CD4-positive, alpha-beta memory T cell (primary cell): ENCODE measurements at regions of chr2 and their contacts with region 1.

Region 1: GRCh38 chr2:131492418-131493198 is 411 bp upstream of the MZT2A start:
- DNase-seq: peak; percentile 93 to 98 (median 95)
- H3K4me3 ChIP-seq: peak overlapping the region; percentile 90 to 93
- H3K4me3 Mint-ChIP-seq: peak overlapping the region; percentile 93 to 99 (median 96)
- H3K27ac ChIP-seq: peak overlapping the region; percentile 94
- H3K27ac Mint-ChIP-seq: peak overlapping the region; percentile 97 to 100 (median 99)
- H3K4me1 ChIP-seq: peaks cover 38% of the 10 kb centered on the region
- H3K4me1 Mint-ChIP-seq: peaks cover 15 to 56% (median 37%) of the 10 kb centered on the region in 4 donors
- H3K27me3 ChIP-seq: no peaks in the 10 kb centered on the region
- H3K27me3 Mint-ChIP-seq: no peaks in the 10 kb centered on the region

Region 2: DNA sequence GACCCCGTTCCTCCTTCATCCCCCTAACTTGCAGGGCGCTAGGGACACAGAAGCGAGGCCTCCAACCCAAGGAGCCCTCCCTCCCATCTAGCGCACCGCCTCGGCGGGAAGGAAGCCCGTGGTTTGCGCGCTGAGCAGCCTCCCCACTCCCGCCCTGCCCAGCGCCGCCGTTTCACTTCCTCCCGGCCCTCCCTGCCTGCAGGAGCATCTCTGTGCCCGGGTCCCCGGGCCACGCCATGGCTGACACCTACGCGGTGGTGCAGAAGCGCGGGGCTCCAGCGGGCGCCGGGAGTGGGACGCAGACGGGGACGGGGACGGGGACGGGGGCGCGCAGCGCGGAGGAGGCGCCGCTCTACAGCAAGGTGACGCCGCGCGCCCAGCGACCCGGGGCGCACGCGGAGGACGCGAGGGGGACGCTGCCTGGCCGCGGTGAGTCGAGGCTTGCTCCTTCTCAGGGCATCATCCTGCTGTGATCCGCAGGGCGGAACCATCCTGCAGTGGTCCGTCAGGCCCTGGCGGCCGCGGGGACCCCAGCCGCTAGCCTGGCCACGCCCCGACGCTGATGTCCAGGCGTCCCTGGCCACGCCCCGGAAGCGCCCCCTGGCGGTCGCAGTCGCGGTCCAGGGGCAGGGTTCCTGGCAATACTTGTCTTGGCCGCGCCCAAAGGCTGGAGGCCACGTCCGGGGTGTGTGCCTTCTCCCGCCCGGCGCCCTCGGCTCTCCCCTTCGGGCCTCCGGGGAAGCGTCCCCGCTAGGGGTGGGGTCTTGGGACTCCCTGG is 1120.4 kb before region 1 on chr2:
- CTCF ChIA-PET with region 1: no interaction called
- POLR2A ChIA-PET with region 1: no interaction called
- intact Hi-C with region 1: loop called (anchors 5 kb)
- DNase-seq: peak; percentile 65 to 76 (median 74)
- H3K4me3 ChIP-seq: peak overlapping the region; percentile 77 to 88
- H3K4me3 Mint-ChIP-seq: peak overlapping the region; percentile 92 to 98 (median 95)
- H3K27ac ChIP-seq: peak overlapping the region; percentile 57
- H3K27ac Mint-ChIP-seq: peak overlapping the region; percentile 90 to 98 (median 97)
- H3K4me1 ChIP-seq: peaks cover 64% of the 10 kb centered on the region
- H3K4me1 Mint-ChIP-seq: peaks cover 51 to 73% (median 64%) of the 10 kb centered on the region in 4 donors
- H3K27me3 ChIP-seq: no peaks in the 10 kb centered on the region
- H3K27me3 Mint-ChIP-seq: no peaks in the 10 kb centered on the region

Region 3: DNA sequence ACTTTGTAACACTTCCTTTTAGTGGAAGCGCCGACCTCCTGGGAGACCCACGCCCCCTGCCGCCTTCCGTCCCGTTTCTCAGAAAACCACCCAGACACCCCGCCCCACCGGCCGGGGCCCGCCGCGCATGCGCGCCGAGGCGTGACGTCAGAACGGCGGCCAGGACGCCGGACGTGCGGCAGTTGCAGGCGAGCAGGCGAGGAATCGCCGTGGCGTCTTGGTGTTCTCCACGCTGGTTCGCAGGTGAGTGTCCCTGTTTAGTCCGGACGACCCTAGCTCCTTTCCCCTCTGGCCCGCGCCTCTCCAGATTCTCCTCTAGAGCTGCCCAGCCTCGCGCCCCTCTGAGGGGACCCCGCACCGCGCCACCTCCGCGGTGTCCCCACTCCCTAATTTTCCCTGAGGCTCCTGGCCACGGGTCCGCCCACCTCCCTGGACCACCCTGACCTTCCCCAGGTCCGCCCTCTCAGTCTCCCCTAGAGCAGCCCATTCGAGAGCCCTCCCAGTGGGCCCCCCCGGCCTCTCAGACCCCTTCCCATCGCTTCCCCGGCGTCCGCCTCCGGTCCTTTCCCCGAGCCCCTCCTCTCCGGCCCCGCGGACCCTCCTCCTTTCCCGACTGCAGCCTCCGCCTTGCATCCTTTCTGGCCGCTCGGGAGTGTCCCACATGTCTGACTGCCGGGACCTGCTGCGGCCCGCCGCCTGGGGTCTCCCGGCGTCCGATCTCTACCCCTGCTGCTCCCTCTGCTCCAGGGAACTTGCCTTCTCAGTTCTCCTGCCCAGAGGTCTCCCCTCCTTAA is 387.3 kb before region 1 on chr2 and contains the start of gene PLEKHB2:
- CTCF ChIA-PET with region 1: no interaction called
- POLR2A ChIA-PET with region 1: interaction called, 3 read pairs
- intact Hi-C with region 1: loop called (anchors 5 kb)
- DNase-seq: peak; percentile 89 to 97 (median 92)
- H3K4me3 ChIP-seq: peak within 1 kb of the TSS; percentile 90 to 91
- H3K4me3 Mint-ChIP-seq: peak within 1 kb of the TSS; percentile 94 to 99 (median 98)
- H3K27ac ChIP-seq: peak within 1 kb of the TSS; percentile 95
- H3K27ac Mint-ChIP-seq: peak within 1 kb of the TSS; percentile 92 to 99 (median 97)
- H3K4me1 ChIP-seq: peaks cover 45% of the 10 kb centered on the region
- H3K4me1 Mint-ChIP-seq: peaks cover 34 to 59% (median 45%) of the 10 kb centered on the region in 4 donors
- H3K27me3 ChIP-seq: no peaks in the 10 kb centered on the region
- H3K27me3 Mint-ChIP-seq: no peaks in the 10 kb centered on the region
- total RNA-seq, gene PLEKHB2: 45.5 to 48.3 TPM

Region 4: DNA sequence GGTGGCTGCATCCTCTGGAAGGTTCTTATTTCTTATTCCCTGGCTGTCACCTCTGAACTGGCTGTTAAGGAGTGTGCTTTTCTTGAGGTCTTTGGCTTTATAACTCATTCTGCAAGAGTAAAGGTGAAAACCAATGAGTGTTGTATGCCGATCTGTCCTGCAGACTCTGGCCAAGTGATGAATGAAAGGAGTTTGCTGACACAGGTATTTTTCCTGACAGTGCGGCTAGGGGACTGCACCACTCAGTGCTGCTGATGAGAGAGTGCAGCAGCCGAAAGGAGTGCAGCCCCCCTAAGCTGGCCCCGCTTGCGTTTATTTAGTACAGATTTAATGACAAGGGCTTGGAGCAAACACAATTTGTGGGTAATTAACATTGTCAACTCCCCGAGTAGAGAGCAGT is 170.4 kb before region 1 on chr2:
- CTCF ChIA-PET with region 1: no interaction called
- POLR2A ChIA-PET with region 1: no interaction called
- intact Hi-C with region 1: no loop called
- DNase-seq: no peak
- H3K4me3 ChIP-seq: no peak overlapping the region
- H3K4me3 Mint-ChIP-seq: no peak overlapping the region
- H3K27ac ChIP-seq: no peak overlapping the region
- H3K27ac Mint-ChIP-seq: no peak overlapping the region
- H3K4me1 ChIP-seq: no peaks in the 10 kb centered on the region
- H3K4me1 Mint-ChIP-seq: no peaks in the 10 kb centered on the region
- H3K27me3 ChIP-seq: no peaks in the 10 kb centered on the region
- H3K27me3 Mint-ChIP-seq: peaks cover 6 to 12% of the 10 kb centered on the region in 2 donors

Region 5: GRCh38 chr2:131521961-131522794 is 29.6 kb after region 1 on chr2:
- CTCF ChIA-PET with region 1: interaction called, 8 read pairs
- POLR2A ChIA-PET with region 1: interaction called, 11 read pairs
- intact Hi-C with region 1: loop called (anchors 1 kb)
- DNase-seq: no peak
- H3K4me3 ChIP-seq: no peak overlapping the region
- H3K4me3 Mint-ChIP-seq: no peak overlapping the region
- H3K27ac ChIP-seq: no peak overlapping the region
- H3K27ac Mint-ChIP-seq: no peak overlapping the region
- H3K4me1 ChIP-seq: peaks cover 1% of the 10 kb centered on the region
- H3K4me1 Mint-ChIP-seq: peaks cover 0 to 2% (median 0%) of the 10 kb centered on the region in 4 donors
- H3K27me3 ChIP-seq: no peaks in the 10 kb centered on the region
- H3K27me3 Mint-ChIP-seq: no peaks in the 10 kb centered on the region

Region 6: DNA sequence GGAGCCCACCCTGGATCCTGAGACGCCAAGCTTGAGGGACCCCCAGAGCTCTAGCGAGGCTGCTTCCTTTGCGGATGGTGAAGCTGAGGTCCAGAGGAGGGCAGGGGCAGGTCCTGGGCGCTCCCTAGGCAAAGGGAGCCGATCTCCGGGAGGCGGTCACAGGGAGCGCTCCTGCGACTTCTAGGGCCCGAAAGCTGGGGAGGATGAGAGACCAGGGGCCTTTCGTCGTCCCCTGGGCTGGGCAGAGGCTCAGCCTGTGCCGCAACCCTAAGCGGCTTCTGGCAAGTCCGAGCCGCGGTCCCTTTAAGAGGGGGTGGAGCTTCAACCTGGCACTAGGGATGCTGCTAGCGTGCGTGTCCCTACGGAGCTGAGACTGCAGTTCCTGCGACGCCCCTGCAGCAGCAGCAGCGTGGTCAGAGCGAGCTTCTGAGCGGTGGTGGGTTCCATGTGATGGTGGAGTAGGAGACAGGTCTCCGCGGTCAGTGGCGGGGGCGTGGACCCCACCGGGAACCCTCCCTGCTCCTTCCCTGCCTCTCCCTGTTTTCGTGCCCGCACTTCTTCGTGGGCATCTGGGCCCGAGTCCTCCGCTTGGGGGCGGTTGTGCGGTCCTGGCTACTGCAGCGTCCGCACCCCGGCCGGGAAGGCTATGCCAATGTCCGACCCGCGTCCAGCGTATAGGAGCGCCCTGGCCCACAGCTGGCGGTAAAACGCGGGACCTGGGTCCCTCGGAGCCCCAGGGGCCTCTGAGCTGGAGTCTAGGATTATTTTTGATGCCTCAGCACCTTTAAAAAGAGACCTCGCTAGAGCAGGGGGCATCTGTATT is 189.7 kb after region 1 on chr2:
- CTCF ChIA-PET with region 1: interaction called, 11 read pairs
- POLR2A ChIA-PET with region 1: interaction called, 12 read pairs
- intact Hi-C with region 1: no loop called
- DNase-seq: peak; percentile 49 to 79 (median 63)
- H3K4me3 ChIP-seq: peak overlapping the region; percentile 51 to 61
- H3K4me3 Mint-ChIP-seq: peak overlapping the region; percentile 85 to 95 (median 90)
- H3K27ac ChIP-seq: peak overlapping the region; percentile 31
- H3K27ac Mint-ChIP-seq: peak overlapping the region; percentile 51 to 93 (median 89)
- H3K4me1 ChIP-seq: peaks cover 25% of the 10 kb centered on the region
- H3K4me1 Mint-ChIP-seq: peaks cover 32 to 49% (median 33%) of the 10 kb centered on the region in 4 donors
- H3K27me3 ChIP-seq: no peaks in the 10 kb centered on the region
- H3K27me3 Mint-ChIP-seq: no peaks in the 10 kb centered on the region